ENCODE measurements at regions of chr3 and their contacts with region 1.

Region 1: GRCh38 chr3:194134757-194135528 is 1.0 kb upstream of the HES1 start:
- DNase-seq: peak; percentile 55
- ATAC-seq: peak; percentile 64
- H3K4me3 ChIP-seq: peak overlapping the region; percentile 61
- H3K27ac ChIP-seq: peak overlapping the region; percentile 31; the same call in 1 of the 2 replicates
- H3K4me1 ChIP-seq: peaks cover 27% of the 10 kb centered on the region
- H3K27me3 ChIP-seq: peaks cover 1 to 3% of the 10 kb centered on the region in 2 experiments; a peak in 3 of 4 replicates
- CTCF ChIP-seq: no peak
- EP300 ChIP-seq: peak in 1 of 2 experiments; percentile 55; a peak in 1 of 4 replicates
- POLR2A ChIP-seq: 0 out of 2 replicates have a peak, but pooled peaks have one; percentile 16
- RAD21 ChIP-seq: no peak

Region 2: DNA sequence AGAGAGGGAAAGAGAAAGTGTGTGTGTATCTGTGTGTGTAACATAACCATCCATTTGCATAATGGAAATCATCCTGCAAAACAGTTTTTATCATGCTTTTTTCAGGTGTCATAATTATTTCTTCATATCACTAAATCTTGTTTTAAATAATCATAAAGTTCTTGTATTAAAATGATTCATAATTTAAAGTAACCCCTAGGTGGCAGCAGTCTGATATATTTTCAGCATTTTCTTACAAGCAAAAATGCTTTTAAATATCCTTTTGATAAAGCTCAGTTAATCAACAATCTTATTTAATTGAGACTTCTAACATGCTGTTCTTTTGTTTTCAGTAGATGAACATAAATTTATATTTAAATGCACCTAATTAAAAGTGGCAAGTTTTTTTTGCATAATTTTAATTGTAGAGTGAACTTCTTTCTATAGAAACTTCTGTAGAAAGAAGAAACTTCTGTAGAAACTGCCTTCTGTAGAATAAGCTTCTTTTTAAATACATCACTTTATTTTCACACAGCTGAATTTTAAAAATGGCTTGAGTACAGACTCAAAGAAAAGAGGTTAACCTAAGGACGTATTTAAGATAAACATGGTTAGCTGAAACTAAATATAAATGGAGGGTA is 469.5 kb before region 1 on chr3:
- CTCF ChIA-PET with region 1: interaction called, 10 read pairs
- POLR2A ChIA-PET with region 1: no interaction called
- RAD21 ChIA-PET with region 1: no interaction called
- SMC1A ChIA-PET with region 1: interaction called, 7 read pairs
- in situ Hi-C with region 1: no loop called
- intact Hi-C with region 1: loop called (anchors 5 kb)
- DNase-seq: no peak
- ATAC-seq: no peak
- H3K4me3 ChIP-seq: no peak overlapping the region
- H3K27ac ChIP-seq: no peak overlapping the region
- H3K4me1 ChIP-seq: no peaks in the 10 kb centered on the region
- H3K27me3 ChIP-seq: no peaks in the 10 kb centered on the region
- CTCF ChIP-seq: peak in 2 of 3 experiments; percentile 10 to 19; a peak in 2 of 6 replicates
- EP300 ChIP-seq: no peak
- POLR2A ChIP-seq: no peak
- RAD21 ChIP-seq: 0 out of 2 replicates have a peak, but pooled peaks have one; percentile 35

Region 3: DNA sequence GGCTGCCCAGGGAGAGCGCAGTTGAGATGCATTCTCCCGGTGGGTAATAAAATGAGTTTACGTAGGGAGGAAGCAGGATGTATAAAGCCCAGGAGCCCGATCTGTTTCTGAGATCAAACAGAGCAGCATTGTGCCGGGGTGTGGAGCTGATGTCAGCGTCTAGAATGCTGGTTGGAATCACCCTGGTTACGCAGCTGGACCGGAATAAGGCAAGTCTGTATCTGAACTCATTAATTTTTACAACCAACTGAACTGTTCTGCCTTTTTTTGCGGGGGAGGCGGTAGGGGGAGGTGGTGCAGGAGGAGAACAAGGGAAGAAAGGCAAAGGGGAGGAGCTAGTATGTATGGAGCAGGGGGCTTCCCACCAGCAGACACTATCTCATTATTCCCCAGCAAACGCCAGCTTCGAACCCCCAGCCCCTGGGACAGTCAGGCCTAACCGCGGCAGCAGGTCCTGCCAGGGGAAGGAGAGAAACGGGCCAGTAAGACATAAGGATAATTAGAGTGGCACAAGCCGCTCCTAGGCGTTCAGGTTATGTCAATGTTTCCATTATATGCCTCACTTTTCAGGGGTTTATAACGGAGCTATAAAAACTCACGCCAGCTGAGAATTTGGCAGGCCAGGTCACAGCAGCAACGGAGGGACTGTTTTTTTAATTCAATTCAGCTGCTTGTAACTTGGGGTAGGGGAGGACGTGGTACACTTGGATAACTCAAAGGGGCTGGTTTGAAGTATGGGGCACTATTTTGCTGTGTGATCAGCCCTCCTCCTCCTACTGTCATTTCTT is 174.3 kb before region 1 on chr3:
- CTCF ChIA-PET with region 1: no interaction called
- POLR2A ChIA-PET with region 1: no interaction called
- RAD21 ChIA-PET with region 1: no interaction called
- SMC1A ChIA-PET with region 1: no interaction called
- in situ Hi-C with region 1: no loop called
- intact Hi-C with region 1: no loop called
- DNase-seq: no peak
- ATAC-seq: no peak
- H3K4me3 ChIP-seq: no peak overlapping the region
- H3K27ac ChIP-seq: no peak overlapping the region
- H3K4me1 ChIP-seq: no peaks in the 10 kb centered on the region
- H3K27me3 ChIP-seq: no peaks in the 10 kb centered on the region; a peak in 1 of 4 replicates
- CTCF ChIP-seq: no peak
- EP300 ChIP-seq: no peak
- POLR2A ChIP-seq: no peak
- RAD21 ChIP-seq: no peak

Region 4: GRCh38 chr3:193971261-193971751 is 163.6 kb before region 1 on chr3:
- CTCF ChIA-PET with region 1: interaction called, 4 read pairs
- POLR2A ChIA-PET with region 1: no interaction called
- RAD21 ChIA-PET with region 1: no interaction called
- SMC1A ChIA-PET with region 1: interaction called, 6 read pairs
- in situ Hi-C with region 1: no loop called
- intact Hi-C with region 1: loop called (anchors 2 kb)
- DNase-seq: peak; percentile 58
- ATAC-seq: peak; percentile 83
- H3K4me3 ChIP-seq: peak overlapping the region; percentile 23; the same call in 1 of the 2 replicates
- H3K27ac ChIP-seq: peak overlapping the region; percentile 35; the same call in 1 of the 2 replicates
- H3K4me1 ChIP-seq: peaks cover 14% of the 10 kb centered on the region
- H3K27me3 ChIP-seq: peaks cover 0 to 1% of the 10 kb centered on the region in 2 experiments; a peak in 2 of 4 replicates
- CTCF ChIP-seq: no peak
- EP300 ChIP-seq: no peak
- POLR2A ChIP-seq: no peak
- RAD21 ChIP-seq: no peak

Region 5: GRCh38 chr3:194070634-194071409 is 64.1 kb before region 1 on chr3:
- CTCF ChIA-PET with region 1: no interaction called
- POLR2A ChIA-PET with region 1: no interaction called
- RAD21 ChIA-PET with region 1: interaction called, 3 read pairs
- SMC1A ChIA-PET with region 1: interaction called, 3 read pairs
- in situ Hi-C with region 1: no loop called
- intact Hi-C with region 1: loop called (anchors 1 kb)
- DNase-seq: peak; percentile 50
- ATAC-seq: peak; percentile 97
- H3K4me3 ChIP-seq: peak overlapping the region; percentile 42; the same call in 1 of the 2 replicates
- H3K27ac ChIP-seq: no peak overlapping the region
- H3K4me1 ChIP-seq: peaks cover 8% of the 10 kb centered on the region
- H3K27me3 ChIP-seq: peaks cover 0 to 2% of the 10 kb centered on the region in 2 experiments; a peak in 2 of 4 replicates
- CTCF ChIP-seq: no peak
- EP300 ChIP-seq: peak in 1 of 2 experiments; percentile 63; a peak in 1 of 4 replicates
- POLR2A ChIP-seq: peak; percentile 49; the same call in 1 of the 2 replicates
- RAD21 ChIP-seq: 0 out of 2 replicates have a peak, but pooled peaks have one; percentile 13

Region 6: GRCh38 chr3:194109192-194109863 is 25.6 kb before region 1 on chr3:
- CTCF ChIA-PET with region 1: interaction called, 6 read pairs
- POLR2A ChIA-PET with region 1: interaction called, 3 read pairs
- RAD21 ChIA-PET with region 1: interaction called, 15 read pairs
- SMC1A ChIA-PET with region 1: interaction called, 11 read pairs
- in situ Hi-C with region 1: no loop called
- intact Hi-C with region 1: no loop called
- DNase-seq: no peak
- ATAC-seq: no peak
- H3K4me3 ChIP-seq: no peak overlapping the region
- H3K27ac ChIP-seq: no peak overlapping the region
- H3K4me1 ChIP-seq: peaks cover 7% of the 10 kb centered on the region
- H3K27me3 ChIP-seq: peaks cover 2 to 6% of the 10 kb centered on the region in 2 experiments; a peak in 3 of 4 replicates
- CTCF ChIP-seq: no peak
- EP300 ChIP-seq: no peak
- POLR2A ChIP-seq: no peak
- RAD21 ChIP-seq: no peak

Region 7: DNA sequence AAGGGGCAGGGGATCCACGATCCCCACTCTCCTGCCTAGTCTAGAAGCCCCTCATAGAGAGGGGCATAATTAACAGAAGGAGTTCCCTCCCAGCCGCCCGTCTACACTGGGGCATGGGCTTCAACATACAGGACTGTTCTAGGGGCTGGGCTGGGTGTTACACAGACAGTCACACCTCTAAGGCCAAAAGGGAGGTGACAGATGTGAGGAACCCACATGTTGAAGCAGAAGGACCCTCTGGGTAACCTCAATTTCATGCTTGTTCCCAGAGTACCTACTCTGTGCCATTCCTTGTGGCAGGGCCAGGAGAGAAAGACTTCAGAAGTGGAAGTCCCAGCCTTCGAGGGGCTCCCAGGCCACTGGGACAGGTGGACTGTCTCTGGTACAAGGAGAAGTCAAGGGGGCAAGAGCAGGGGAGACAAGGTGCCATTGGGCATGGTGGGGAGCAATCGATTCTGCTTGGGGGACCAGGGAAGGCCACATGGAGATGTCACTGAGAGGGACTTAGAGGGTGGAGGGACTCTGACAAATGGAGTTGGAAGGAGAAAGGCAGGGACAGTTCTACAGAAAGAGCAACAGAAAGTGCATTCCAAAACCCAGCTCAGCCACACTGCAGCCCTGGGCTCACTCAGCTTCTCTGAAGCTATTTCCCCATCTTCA is 144.9 kb after region 1 on chr3:
- CTCF ChIA-PET with region 1: no interaction called
- POLR2A ChIA-PET with region 1: no interaction called
- RAD21 ChIA-PET with region 1: no interaction called
- SMC1A ChIA-PET with region 1: no interaction called
- in situ Hi-C with region 1: no loop called
- intact Hi-C with region 1: no loop called
- DNase-seq: no peak
- ATAC-seq: no peak
- H3K4me3 ChIP-seq: no peak overlapping the region
- H3K27ac ChIP-seq: no peak overlapping the region
- H3K4me1 ChIP-seq: no peaks in the 10 kb centered on the region
- H3K27me3 ChIP-seq: peaks cover 0 to 4% of the 10 kb centered on the region in 2 experiments; a peak in 2 of 4 replicates
- CTCF ChIP-seq: no peak
- EP300 ChIP-seq: no peak
- POLR2A ChIP-seq: no peak
- RAD21 ChIP-seq: no peak

Region 8: DNA sequence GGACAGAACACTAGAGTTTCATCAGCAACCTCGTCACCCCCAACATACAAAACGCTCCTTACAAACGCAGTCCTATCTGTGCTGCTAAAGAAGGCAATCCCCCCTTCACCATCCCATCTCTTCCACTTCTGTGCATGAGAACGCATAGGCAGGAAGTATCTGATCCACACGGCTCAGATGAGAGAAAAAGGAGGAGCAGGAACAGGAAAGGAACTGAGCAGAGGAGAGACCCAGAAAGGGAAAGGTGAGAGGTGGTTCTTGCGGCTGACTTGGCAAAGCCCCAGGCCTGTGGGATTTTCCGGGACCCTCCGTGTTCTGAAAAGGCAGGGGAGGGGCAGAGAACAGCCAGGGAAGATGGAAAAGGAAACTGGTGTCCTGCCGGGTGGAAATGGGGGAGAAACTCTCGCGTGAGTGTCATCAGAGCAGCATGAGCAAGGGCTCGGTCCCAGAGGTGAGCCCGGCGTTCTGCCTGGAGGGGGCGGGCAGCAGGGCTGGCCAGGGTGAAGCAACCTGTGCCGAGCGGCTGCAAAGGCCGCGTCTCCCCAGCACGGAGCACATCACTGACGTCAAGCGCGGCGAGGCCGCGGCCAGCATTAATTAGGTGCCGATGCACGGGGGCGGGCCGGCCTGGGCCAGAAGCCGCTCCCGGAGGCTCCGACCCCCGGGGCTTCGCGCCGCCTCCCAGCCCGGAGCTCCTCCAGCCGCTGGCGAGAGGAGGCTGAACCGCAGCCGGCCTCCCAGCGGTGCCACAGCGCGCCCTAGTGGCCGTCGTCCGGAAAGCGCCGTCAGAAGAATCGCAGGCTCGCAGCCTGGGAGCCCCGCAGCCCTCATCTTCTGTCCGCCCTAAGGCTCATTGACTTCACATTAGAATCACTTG is 180.4 kb after region 1 on chr3:
- CTCF ChIA-PET with region 1: interaction called, 11 read pairs
- POLR2A ChIA-PET with region 1: interaction called, 3 read pairs
- RAD21 ChIA-PET with region 1: interaction called, 13 read pairs
- SMC1A ChIA-PET with region 1: interaction called, 12 read pairs
- in situ Hi-C with region 1: no loop called
- intact Hi-C with region 1: loop called (anchors 2 kb)
- DNase-seq: peak; percentile 38
- ATAC-seq: peak; percentile 95
- H3K4me3 ChIP-seq: peak overlapping the region; percentile 57
- H3K27ac ChIP-seq: no peak overlapping the region
- H3K4me1 ChIP-seq: peaks cover 6% of the 10 kb centered on the region
- H3K27me3 ChIP-seq: no peaks in the 10 kb centered on the region; a peak in 1 of 4 replicates
- CTCF ChIP-seq: peak; percentile 82 to 96 (median 92)
- EP300 ChIP-seq: no peak
- POLR2A ChIP-seq: no peak
- RAD21 ChIP-seq: peak; percentile 98

Region 9: DNA sequence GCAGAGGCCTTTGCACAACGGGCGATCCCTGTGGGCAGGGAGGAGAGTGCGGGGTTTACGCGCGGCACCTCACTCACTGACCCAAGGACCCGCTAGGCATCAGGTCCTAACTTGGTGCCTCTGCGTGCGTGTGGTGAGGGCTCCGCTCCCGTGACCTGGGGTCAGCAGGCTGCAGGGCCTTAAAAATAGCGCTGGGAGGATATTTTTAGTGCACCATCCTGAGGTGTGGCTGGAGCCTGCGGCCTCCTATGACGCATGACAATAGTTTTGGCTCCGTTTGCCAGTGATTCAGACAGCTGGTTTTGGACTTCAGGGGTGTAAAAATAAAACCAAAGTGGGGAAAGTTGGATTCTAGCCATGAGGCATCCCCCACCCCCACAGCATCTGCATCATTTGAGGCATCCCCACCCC is 689.8 kb after region 1 on chr3:
- CTCF ChIA-PET with region 1: no interaction called
- POLR2A ChIA-PET with region 1: no interaction called
- RAD21 ChIA-PET with region 1: no interaction called
- SMC1A ChIA-PET with region 1: no interaction called
- in situ Hi-C with region 1: no loop called
- intact Hi-C with region 1: no loop called
- DNase-seq: no peak
- ATAC-seq: no peak
- H3K4me3 ChIP-seq: no peak overlapping the region
- H3K27ac ChIP-seq: no peak overlapping the region
- H3K4me1 ChIP-seq: no peaks in the 10 kb centered on the region
- H3K27me3 ChIP-seq: no peaks in the 10 kb centered on the region
- CTCF ChIP-seq: no peak
- EP300 ChIP-seq: no peak
- POLR2A ChIP-seq: no peak
- RAD21 ChIP-seq: no peak